Tibial artery (tissue), 4 donors: ENCODE measurements at regions of chr17 and their contacts with region 1.

Region 1: DNA sequence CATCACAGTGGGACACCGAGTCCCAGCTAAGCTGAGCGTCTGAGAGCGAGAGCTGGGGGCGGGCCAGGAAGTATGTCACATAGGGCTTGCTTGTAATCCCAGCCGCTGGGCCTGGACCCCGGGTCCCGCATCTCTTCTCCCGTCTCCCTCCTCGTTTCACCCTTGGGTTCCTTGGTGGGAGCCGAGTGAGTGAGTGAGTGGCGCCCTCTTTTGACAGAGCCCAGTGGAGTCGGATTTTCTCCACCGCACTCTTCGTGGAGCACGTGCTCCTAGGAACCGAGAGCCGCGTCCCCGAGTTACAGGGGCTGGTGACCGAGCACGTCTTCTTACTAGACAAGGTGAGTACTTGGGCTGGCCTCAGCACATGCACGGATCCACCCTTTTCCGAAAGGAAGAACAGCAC is 50.8 kb upstream of the ENDOV start:
- DNase-seq: peak in 1 of 2 donors; percentile 23
- H3K4me3 ChIP-seq: no peak overlapping the region
- H3K27ac ChIP-seq: no peak overlapping the region
- H3K4me1 ChIP-seq: peaks cover 0 to 5% (median 0%) of the 10 kb centered on the region in 4 donors
- H3K27me3 ChIP-seq: no peaks in the 10 kb centered on the region
- CTCF ChIP-seq: peak in 1 of 2 experiments; percentile 24

Region 2: DNA sequence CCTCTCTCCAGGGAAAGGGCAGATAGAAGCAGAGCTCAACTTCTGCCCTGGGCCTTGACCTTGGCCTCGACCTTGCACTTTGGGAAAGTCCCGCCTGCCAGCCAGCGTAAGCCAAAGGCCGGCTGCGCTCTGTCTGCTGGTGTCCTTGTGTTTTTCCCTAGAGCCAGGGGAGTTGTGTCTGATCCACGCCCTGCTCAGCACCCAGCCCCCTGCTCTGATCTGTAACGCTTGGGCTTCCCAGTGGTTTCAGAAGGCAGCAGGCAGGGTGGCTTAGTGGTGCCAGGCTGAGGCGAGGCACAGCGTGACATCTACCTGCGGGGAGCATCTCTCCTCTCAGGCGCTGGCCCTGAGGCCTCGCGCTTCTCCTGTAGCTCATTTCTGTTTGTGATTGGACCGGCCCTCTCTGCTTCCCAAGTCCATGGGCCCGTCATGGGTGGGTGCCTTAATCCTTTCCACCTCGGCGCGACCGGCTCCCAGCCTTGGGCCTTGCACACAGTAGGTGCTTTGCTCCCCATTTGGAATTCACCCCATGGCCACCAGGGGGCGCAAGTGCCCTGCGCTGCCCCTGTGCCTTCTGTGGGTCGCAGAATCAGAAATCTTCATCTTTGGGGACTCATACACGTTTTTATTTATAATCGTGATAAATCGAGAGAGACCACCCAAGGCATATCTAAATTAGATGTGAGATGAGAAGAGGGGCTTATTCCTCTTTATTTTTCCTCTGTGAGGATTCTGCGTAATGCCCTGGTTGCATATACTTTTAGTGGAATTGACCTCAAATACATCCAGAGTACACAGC is 168.3 kb before region 1 on chr17:
- intact Hi-C with region 1: loop called (anchors 10 kb)
- DNase-seq: no peak
- H3K4me3 ChIP-seq: no peak overlapping the region
- H3K27ac ChIP-seq: no peak overlapping the region
- H3K4me1 ChIP-seq: peaks cover 0 to 15% (median 6%) of the 10 kb centered on the region in 4 donors
- H3K27me3 ChIP-seq: peaks cover 0 to 43% of the 10 kb centered on the region in 2 donors
- CTCF ChIP-seq: peak; percentile 83 to 85

Region 3: DNA sequence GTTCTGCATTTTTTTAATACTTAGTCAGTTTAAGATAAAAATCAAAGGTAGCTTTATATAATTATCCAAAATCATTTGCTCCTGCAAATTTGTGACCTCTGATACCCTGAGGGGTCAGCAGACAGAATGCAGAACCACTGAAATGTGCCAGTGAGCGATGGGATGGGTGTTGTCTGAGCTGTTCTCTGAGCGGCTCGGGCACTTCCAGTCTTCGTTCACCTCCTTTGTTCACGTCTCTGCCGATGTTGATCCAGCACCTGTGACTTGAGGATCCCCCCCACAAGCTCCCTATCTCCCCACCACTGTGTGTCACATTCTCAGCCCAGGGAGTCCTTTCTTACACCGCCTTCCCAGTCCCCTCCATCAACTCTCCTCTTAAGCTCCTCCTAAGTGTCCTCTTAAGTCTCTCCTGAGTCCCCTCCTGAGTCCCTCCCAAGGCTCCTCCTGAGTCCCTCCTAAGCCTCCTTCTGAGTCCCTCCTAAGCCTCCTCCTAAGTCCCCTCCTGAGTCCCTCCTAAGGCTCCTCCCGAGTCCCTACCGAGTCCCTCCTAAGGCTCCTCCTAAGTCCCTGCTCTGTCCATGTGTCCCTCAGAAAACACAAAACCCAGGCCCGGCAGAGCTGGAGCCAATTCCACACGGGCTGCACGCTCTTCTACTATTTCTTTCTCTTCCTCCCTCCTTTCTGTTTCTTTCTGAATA is 56.1 kb before region 1 on chr17:
- intact Hi-C with region 1: no loop called
- DNase-seq: peak in 1 of 2 donors; percentile 53
- H3K4me3 ChIP-seq: no peak overlapping the region
- H3K27ac ChIP-seq: no peak overlapping the region
- H3K4me1 ChIP-seq: no peaks in the 10 kb centered on the region
- H3K27me3 ChIP-seq: no peaks in the 10 kb centered on the region
- CTCF ChIP-seq: no peak

Region 4: DNA sequence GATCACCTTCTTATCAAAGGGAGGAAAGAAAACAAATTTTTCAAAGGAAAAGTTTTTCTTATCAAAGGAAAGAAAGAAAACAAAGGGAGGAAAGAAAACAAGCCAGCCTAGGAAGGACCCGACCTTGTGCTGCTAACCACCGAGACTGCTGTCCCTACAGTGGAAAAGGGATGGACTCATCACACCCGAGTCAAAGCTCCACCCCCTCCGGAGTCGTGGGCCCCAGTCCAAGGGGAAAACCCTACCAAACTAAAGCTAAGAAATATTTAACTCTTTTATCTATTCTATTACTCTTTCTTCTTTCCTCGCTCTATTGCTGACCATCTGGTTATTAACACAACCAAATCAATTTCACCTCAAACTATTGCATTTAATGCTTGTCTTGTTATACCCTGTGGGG is 44.7 kb after region 1 on chr17:
- intact Hi-C with region 1: no loop called
- DNase-seq: no peak
- H3K4me3 ChIP-seq: no peak overlapping the region
- H3K27ac ChIP-seq: no peak overlapping the region
- H3K4me1 ChIP-seq: peaks cover 0 to 4% (median 1%) of the 10 kb centered on the region in 4 donors
- H3K27me3 ChIP-seq: no peaks in the 10 kb centered on the region
- CTCF ChIP-seq: no peak